Heart right ventricle (tissue), 16 donors: ENCODE measurements at regions of chr13 and their contacts with region 1.

Region 1: DNA sequence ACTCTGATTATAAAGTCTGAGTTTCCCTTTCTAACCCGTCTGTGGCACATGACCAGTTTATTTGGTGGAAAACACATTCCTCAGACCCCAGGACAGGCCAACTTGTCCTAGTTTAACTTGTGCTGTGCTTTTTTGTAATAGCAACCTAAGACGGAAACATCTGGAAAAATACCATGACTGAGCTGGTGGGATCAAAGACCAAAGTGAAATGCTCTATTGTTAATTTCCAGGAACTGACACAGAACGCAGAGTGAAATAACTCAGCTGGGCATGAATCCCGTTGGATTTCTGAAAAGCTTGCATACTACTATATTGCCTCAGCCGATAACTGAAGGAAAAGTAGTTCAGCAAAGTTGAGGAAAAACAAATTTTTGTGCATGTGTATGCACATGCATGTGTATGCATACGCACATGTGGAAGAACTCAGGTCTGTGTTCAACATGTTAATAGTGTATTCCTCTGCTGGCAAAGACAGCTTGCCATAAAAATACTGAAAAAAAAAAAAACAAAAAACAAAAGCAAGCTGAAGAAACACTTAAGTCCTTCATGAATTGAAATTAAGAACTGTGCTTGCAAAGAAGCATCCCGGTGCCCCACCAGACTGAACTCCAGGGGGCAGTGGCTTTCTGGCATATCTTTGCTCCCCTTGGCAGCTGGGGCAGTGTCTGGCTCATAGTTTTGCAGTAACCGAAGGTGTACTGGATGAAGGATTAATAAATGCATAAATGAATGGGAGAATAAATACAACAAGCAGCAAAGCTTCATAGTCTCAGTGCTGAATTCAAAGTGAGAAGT is 187.8 kb downstream of the LHFPL6 start:
- DNase-seq: peak; percentile 60 to 72
- ATAC-seq: peak; percentile 72 to 92 (median 84)
- H3K4me3 ChIP-seq: peak overlapping the region in 5 of 10 donors; percentile 2 to 32 (median 15)
- H3K27ac ChIP-seq: peak overlapping the region; percentile 41 to 87 (median 72)
- H3K4me1 ChIP-seq: peaks cover 9 to 93% (median 76%) of the 10 kb centered on the region in 9 donors
- H3K27me3 ChIP-seq: no peaks in the 10 kb centered on the region
- CTCF ChIP-seq: peak; percentile 49 to 74 (median 61)

Region 2: DNA sequence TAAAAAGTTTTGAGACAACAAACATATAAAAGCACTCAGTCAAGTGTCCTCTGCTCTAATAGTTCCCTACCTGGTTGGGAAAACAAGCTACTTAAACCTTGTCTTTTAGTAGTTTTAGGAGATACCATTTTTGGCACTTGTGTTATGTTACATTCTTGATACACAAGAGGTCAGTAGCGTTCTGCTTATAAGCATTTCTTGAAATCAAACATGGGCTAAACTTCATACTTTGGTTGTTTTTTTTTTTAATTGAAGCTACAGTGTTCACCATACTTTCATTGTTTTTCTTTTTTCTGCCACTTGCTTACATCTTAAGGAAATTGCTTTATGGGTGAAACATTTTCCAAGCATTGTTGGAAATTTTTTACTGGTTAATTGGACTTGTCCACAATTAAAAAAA is 364.0 kb before region 1 on chr13:
- intact Hi-C with region 1: loop called in 1 of 10 experiments (anchors 10 kb)
- DNase-seq: no peak
- ATAC-seq: peak in 1 of 8 donors; percentile 46
- H3K4me3 ChIP-seq: no peak overlapping the region
- H3K27ac ChIP-seq: no peak overlapping the region
- H3K4me1 ChIP-seq: peaks cover 0 to 3% (median 0%) of the 10 kb centered on the region in 9 donors
- H3K27me3 ChIP-seq: no peaks in the 10 kb centered on the region
- CTCF ChIP-seq: peak; percentile 26 to 73 (median 56)

Region 3: DNA sequence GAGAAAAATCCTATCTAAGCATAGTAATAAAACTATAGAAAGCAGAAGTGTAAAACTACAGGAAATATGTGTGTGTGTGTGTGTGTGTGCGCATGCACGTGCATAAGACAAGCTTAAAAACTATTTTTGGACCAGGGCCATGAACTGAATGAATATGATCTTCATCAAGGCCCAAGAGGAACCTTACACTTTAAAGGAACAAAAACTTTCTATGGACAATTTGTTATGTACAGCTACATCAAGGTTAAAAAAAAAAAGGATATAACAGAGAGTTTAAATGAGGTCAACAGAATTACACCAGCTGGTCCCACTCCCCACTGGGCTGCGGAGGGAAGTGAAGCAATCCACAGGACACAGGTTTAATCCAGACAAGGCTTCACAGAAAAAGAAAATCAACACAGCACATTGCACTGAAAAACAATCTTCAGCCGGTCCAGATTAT is 36.7 kb after region 1 on chr13:
- intact Hi-C with region 1: loop called in 5 of 10 experiments (anchors 5 kb)
- DNase-seq: peak; percentile 40 to 63
- ATAC-seq: peak; percentile 59 to 87 (median 74)
- H3K4me3 ChIP-seq: no peak overlapping the region
- H3K27ac ChIP-seq: peak overlapping the region; percentile 62 to 92 (median 75)
- H3K4me1 ChIP-seq: peaks cover 31 to 96% (median 83%) of the 10 kb centered on the region in 9 donors
- H3K27me3 ChIP-seq: no peaks in the 10 kb centered on the region
- CTCF ChIP-seq: no peak

Region 4: GRCh38 chr13:39527961-39528660 is 112.9 kb after region 1 on chr13:
- intact Hi-C with region 1: loop called in 1 of 10 experiments (anchors 10 kb)
- DNase-seq: no peak
- ATAC-seq: peak in 3 of 8 donors; percentile 14 to 79 (median 43)
- H3K4me3 ChIP-seq: no peak overlapping the region
- H3K27ac ChIP-seq: peak overlapping the region in 6 of 10 donors; percentile 5 to 63 (median 28)
- H3K4me1 ChIP-seq: peaks cover 10 to 91% (median 76%) of the 10 kb centered on the region in 9 donors
- H3K27me3 ChIP-seq: no peaks in the 10 kb centered on the region
- CTCF ChIP-seq: no peak

Region 5: DNA sequence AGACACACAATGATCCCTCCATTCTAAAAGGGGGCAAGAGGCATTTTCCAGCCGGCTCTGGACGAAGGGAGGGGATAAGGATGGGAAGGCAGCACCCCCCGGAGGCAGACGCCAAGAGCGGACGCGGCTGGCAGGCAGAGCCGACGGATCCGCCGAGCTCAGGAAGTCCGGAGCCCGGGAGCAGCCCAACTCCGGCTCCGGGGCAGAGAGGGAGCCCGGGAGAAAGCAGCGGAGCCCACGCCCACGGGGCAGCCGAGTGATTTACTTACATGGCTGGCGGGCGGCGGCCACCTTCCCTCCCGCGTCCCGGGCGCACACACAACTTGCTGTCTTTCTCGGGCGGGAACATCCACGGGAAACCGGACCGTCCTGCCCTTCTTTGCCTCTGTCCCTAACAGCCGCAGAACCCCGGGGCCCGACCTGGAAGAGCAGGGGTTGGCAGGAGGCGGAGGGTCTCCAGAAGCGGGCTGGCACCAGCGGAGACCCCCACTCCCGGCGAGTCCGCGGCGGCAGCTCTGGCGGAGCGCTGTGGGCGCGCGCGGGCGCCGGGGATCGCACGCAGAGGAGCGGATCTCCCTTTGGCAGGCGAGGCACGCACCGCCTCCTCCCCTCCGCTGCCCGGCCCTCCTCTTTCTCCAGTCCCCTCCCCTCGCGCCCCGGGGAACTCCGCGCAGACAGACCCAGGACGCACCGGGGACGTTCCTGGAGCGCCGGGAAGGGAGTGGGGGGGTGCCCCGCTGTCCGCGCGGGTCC is 187.6 kb after region 1 on chr13 and contains the start of gene LHFPL6:
- intact Hi-C with region 1: loop called (anchors 1 to 5 kb)
- DNase-seq: peak; percentile 88 to 90
- ATAC-seq: peak; percentile 93 to 98 (median 94)
- H3K4me3 ChIP-seq: peak within 1 kb of the TSS; percentile 69 to 96 (median 90)
- H3K27ac ChIP-seq: peak within 1 kb of the TSS; percentile 87 to 98 (median 96)
- H3K4me1 ChIP-seq: peaks cover 0 to 50% (median 21%) of the 10 kb centered on the region in 9 donors
- H3K27me3 ChIP-seq: peaks cover 0 to 33% (median 0%) of the 10 kb centered on the region in 7 donors
- CTCF ChIP-seq: peak in 7 of 9 donors; percentile 39 to 69 (median 45)
- total RNA-seq, gene LHFPL6: 41.5 to 65.8 (median 58.2) TPM

Region 6: GRCh38 chr13:39855236-39855635 is 440.0 kb after region 1 on chr13:
- intact Hi-C with region 1: no loop called
- DNase-seq: no peak
- ATAC-seq: no peak
- H3K4me3 ChIP-seq: no peak overlapping the region
- H3K27ac ChIP-seq: no peak overlapping the region
- H3K4me1 ChIP-seq: no peaks in the 10 kb centered on the region
- H3K27me3 ChIP-seq: peaks cover 0 to 4% (median 0%) of the 10 kb centered on the region in 7 donors
- CTCF ChIP-seq: no peak